Heart left ventricle (tissue), 16 donors: ENCODE measurements at regions of chr10 and their contacts with region 1.

Region 1: DNA sequence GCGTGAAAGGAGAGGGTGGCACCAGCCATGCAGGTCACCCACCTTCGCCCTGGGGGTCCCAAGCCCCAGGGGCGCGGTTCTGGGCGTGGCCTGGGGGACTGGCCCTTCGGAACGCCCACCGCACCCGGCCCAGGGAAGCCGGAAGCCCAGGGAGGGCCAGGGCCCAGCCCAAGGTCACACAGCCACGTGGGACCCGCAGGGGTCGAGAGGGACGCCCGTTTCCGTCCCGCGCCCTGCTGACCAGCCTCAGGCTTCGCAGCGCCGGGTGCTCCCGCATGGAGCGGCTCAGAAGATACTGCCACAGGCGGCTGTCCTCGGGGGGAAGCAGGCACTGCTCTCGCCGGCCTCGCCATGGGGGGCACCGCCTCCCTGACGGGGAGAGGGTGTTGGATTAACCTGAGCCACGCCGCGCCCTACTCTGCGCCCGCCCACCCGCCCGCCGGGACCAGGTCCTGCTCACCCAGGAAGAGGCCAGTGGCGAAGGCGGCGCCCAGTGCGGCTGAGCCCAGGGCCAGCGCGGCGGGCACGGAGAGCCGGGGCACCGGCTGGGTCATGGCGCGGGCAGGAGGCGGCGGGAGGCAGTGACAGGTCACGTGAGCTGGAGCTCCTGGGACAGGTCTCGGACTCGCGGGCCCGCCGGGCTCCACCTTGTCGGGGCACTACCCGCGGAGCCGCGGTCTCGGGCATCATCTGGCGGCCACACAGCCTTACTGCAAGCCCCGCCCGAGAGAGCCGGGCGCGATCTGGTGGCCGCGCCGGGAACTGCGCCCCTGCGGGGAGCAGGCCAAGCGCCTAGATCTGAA is at the start of gene COMTD1:
- DNase-seq: peak; percentile 91 to 98 (median 95)
- ATAC-seq: peak; percentile 59 to 82 (median 81)
- H3K4me3 ChIP-seq: peak within 1 kb of the TSS; percentile 64 to 99 (median 81)
- H3K27ac ChIP-seq: peak within 1 kb of the TSS; percentile 66 to 93 (median 84)
- H3K4me1 ChIP-seq: peaks cover 0 to 30% (median 15%) of the 10 kb centered on the region in 12 donors
- H3K27me3 ChIP-seq: no peaks in the 10 kb centered on the region
- CTCF ChIP-seq: peak; percentile 100
- POLR2A ChIP-seq: peak in 1 of 2 donors; percentile 44
- total RNA-seq, gene COMTD1: 20.8 to 75.0 (median 37.0) TPM

Region 2: DNA sequence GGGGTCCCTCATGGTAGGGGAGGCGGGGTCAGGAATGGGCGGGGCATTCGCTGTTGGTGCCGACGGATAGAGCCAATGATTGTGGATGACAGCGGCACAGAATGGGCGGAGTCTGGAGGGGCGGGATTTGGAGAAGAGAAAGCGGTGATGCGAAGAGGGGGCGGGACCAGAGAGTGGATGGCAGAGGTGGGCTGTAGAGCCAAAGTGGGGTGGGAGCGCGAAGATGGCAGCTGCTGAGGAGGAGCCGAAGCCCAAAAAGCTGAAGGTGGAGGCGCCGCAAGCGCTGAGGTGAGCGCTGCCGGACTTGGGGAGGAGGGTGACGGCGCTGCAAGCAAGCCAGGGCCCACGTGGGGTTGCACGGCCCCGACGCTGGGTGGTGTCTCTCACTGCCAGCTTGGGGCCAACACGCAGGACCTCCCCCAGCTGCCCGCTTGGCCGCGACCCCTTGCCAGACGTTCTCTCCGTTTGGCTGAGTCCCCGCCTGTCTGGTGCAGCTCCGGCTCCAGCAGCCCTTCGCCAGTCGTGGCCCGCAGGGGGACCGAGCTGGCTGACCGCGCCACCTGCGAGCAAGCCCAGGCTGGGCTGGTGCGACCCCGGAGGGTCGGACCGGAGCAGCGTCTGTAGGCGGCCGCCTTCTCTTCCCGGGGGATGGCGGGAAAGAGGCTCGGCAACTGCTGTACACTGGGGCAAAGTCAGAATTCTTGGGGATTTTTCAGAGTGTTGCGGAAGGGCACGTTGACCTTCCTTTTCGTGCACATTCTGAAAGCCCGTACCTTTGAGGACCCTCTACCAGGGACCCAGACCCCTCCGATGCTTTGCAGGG is 1084.3 kb before region 1 on chr10 and contains the start of gene ADK:
- intact Hi-C with region 1: loop called in 2 of 10 experiments (anchors 10 kb)
- DNase-seq: peak; percentile 99 to 100 (median 100)
- ATAC-seq: peak; percentile 95 to 98 (median 98)
- H3K4me3 ChIP-seq: peak within 1 kb of the TSS; percentile 65 to 96 (median 88)
- H3K27ac ChIP-seq: peak within 1 kb of the TSS; percentile 85 to 97 (median 92)
- H3K4me1 ChIP-seq: peaks cover 0 to 42% (median 32%) of the 10 kb centered on the region in 12 donors
- H3K27me3 ChIP-seq: no peaks in the 10 kb centered on the region
- CTCF ChIP-seq: peak in 6 of 12 donors; percentile 10 to 62 (median 30)
- POLR2A ChIP-seq: peak; percentile 67 to 93
- total RNA-seq, gene ADK: 22.7 to 46.2 (median 39.8) TPM

Region 3: DNA sequence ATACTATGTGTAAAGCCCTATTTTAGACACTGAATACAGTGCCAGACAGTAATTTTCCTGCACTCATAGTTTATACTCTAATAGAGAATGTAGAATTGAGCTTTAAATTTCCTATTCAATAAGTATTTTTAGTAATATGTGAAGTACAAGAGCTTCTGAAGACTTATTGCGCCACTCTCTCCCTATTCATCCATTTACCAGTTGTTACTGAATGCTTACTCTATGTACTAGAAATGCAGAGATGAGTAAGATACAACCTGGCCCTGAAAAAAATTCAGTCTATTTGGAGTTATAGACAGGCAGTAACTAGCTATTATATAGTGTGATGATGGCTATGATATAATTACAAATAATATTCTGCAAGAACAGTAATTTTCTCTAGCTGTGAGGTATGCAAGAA is 985.7 kb before region 1 on chr10:
- intact Hi-C with region 1: loop called in 6 of 10 experiments (anchors 2 to 10 kb)
- DNase-seq: no peak
- ATAC-seq: no peak
- H3K4me3 ChIP-seq: no peak overlapping the region
- H3K27ac ChIP-seq: no peak overlapping the region
- H3K4me1 ChIP-seq: no peaks in the 10 kb centered on the region
- H3K27me3 ChIP-seq: no peaks in the 10 kb centered on the region
- CTCF ChIP-seq: no peak
- POLR2A ChIP-seq: no peak

Region 4: DNA sequence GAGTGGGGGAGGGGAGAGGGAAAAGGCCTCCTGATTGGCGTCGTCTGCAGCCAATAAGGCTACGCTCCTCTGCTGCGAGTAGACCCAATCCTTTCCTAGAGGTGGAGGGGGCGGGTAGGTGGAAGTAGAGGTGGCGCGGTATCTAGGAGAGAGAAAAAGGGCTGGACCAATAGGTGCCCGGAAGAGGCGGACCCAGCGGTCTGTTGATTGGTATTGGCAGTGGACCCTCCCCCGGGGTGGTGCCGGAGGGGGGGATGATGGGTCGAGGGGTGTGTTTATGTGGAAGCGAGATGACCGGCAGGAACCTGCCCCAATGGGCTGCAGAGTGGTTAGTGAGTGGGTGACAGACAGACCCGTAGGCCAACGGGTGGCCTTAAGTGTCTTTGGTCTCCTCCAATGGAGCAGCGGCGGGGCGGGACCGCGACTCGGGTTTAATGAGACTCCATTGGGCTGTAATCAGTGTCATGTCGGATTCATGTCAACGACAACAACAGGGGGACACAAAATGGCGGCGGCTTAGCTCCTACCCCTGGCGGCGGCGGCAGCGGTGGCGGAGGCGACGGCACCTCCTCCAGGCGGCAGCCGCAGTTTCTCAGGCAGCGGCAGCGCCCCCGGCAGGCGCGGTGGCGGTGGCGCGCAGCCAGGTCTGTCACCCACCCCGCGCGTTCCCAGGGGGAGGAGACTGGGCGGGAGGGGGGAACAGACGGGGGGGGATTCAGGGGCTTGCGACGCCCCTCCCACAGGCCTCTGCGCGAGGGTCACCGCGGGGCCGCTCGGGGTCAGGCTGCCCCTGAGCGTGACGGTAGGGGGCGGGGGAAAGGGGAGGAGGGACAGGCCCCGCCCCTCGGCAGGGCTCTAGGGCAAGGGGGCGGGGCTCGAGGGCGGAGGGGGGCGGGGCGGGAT is 409.2 kb before region 1 on chr10 and contains the start of gene KAT6B:
- intact Hi-C with region 1: loop called in 2 of 10 experiments (anchors 10 kb)
- DNase-seq: peak; percentile 100
- ATAC-seq: peak; percentile 90 to 97 (median 95)
- H3K4me3 ChIP-seq: peak within 1 kb of the TSS; percentile 67 to 99 (median 92)
- H3K27ac ChIP-seq: peak within 1 kb of the TSS; percentile 93 to 100 (median 99)
- H3K4me1 ChIP-seq: peaks cover 0 to 55% (median 33%) of the 10 kb centered on the region in 12 donors
- H3K27me3 ChIP-seq: no peaks in the 10 kb centered on the region
- CTCF ChIP-seq: peak in 5 of 12 donors; percentile 11 to 44 (median 25)
- POLR2A ChIP-seq: peak in 1 of 2 donors; percentile 71
- total RNA-seq, gene KAT6B: 36.8 to 61.3 (median 46.9) TPM

Region 5: DNA sequence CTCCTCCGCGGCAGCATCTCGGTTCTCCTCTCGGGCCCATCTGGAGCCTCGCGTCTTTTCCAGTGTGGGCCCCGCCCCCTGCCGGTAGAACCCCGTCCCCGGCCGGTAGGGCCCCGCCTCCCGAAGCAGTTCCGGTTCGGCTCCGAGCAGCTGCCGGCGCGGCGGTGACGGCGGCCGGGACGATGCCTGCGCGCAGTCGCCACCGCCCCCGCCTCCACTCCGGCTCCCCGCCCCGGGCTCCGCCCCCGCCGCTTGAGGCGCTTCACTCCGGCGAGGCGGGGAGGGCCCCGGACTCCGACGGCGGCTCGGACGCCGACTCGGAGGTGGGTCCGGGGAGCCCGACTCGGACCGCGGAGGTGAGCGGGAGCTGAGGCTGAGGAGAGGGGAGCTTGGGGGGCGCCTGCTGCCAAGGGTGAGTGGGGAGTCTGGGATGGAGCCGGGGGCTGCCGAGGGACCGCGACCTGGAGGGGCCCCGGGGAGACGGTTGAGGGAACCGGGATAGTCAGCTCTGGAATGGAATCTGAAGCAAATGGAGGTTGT is 124.1 kb before region 1 on chr10 and contains the start of gene SAMD8:
- intact Hi-C with region 1: loop called in 8 of 10 experiments (anchors 2 to 10 kb)
- DNase-seq: peak; percentile 95 to 98 (median 98)
- ATAC-seq: peak; percentile 62 to 90 (median 89)
- H3K4me3 ChIP-seq: peak within 1 kb of the TSS; percentile 62 to 96 (median 82)
- H3K27ac ChIP-seq: peak within 1 kb of the TSS; percentile 87 to 98 (median 96)
- H3K4me1 ChIP-seq: peaks cover 0 to 62% (median 34%) of the 10 kb centered on the region in 12 donors
- H3K27me3 ChIP-seq: no peaks in the 10 kb centered on the region
- CTCF ChIP-seq: peak; percentile 20 to 64 (median 50)
- POLR2A ChIP-seq: peak; percentile 75 to 94
- total RNA-seq, gene SAMD8: 19.4 to 43.0 (median 25.1) TPM

Region 6: GRCh38 chr10:75210282-75211006 is 25.1 kb before region 1 on chr10 and contains the start of gene VDAC2:
- intact Hi-C with region 1: loop called in 1 of 10 experiments (anchors 2 kb)
- DNase-seq: peak; percentile 92 to 97 (median 94)
- ATAC-seq: peak; percentile 94 to 98 (median 97)
- H3K4me3 ChIP-seq: peak within 1 kb of the TSS; percentile 78 to 100 (median 91)
- H3K27ac ChIP-seq: peak within 1 kb of the TSS; percentile 98 to 100 (median 100)
- H3K4me1 ChIP-seq: peaks cover 2 to 52% (median 36%) of the 10 kb centered on the region in 12 donors
- H3K27me3 ChIP-seq: no peaks in the 10 kb centered on the region
- CTCF ChIP-seq: peak in 1 of 12 donors; percentile 23
- POLR2A ChIP-seq: peak; percentile 51 to 83
- total RNA-seq, gene VDAC2: 334 to 554 (median 472) TPM

Region 7: GRCh38 chr10:75475470-75476182 is 240.1 kb after region 1 on chr10:
- intact Hi-C with region 1: no loop called
- DNase-seq: no peak
- ATAC-seq: no peak
- H3K4me3 ChIP-seq: no peak overlapping the region
- H3K27ac ChIP-seq: no peak overlapping the region
- H3K4me1 ChIP-seq: peaks cover 0 to 20% (median 3%) of the 10 kb centered on the region in 12 donors
- H3K27me3 ChIP-seq: no peaks in the 10 kb centered on the region
- CTCF ChIP-seq: no peak
- POLR2A ChIP-seq: no peak